Activated CD4-positive, alpha-beta T cell treated with anti-CD3 and anti-CD28 coated beads for 36 hours (primary cell): ENCODE measurements at regions of chr6 and their contacts with region 1.

Region 1: DNA sequence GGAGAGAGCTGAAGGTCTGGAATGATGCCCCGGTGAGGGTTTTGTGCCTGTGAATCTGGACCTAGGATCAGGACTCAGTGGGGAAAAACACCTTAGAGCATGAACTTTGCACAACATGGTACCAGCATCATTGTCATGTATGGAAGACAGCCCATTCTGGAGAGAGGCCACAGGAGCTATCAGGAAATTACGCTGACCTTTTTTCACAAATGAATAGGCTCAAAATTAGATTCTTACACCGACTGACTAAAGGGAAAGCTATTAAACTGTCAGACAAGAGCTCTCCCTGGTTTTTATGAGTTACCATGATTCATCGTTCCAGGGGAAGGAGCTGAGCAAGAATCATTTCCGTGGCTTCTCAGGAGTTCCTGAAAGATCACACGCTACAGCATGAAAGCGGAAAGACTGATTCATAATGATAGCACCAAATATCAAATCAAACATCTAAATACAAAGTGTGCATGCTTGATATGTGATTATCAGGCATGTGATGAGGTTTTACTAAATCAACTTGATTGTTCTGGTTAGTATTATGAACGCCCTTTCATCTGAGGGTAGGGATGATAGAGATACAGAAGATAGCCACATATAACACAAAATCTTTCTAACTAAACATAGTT is 224.9 kb upstream of the SMLR1 start:
- DNase-seq: peak; percentile 38
- ATAC-seq: peak; percentile 97
- H3K4me3 Mint-ChIP-seq: peak overlapping the region; percentile 11
- H3K27ac Mint-ChIP-seq: peak overlapping the region; percentile 53
- H3K4me1 Mint-ChIP-seq: peaks cover 26% of the 10 kb centered on the region
- H3K27me3 Mint-ChIP-seq: no peaks in the 10 kb centered on the region

Region 2: GRCh38 chr6:130027948-130028347 is 574.3 kb before region 1 on chr6:
- CTCF ChIA-PET with region 1: no interaction called
- POLR2A ChIA-PET with region 1: no interaction called
- intact Hi-C with region 1: loop called in 1 of 2 experiments (anchors 2 kb)
- DNase-seq: no peak
- ATAC-seq: peak; percentile 67
- H3K4me3 Mint-ChIP-seq: no peak overlapping the region
- H3K27ac Mint-ChIP-seq: peak overlapping the region; percentile 66
- H3K4me1 Mint-ChIP-seq: peaks cover 62% of the 10 kb centered on the region
- H3K27me3 Mint-ChIP-seq: no peaks in the 10 kb centered on the region

Region 3: DNA sequence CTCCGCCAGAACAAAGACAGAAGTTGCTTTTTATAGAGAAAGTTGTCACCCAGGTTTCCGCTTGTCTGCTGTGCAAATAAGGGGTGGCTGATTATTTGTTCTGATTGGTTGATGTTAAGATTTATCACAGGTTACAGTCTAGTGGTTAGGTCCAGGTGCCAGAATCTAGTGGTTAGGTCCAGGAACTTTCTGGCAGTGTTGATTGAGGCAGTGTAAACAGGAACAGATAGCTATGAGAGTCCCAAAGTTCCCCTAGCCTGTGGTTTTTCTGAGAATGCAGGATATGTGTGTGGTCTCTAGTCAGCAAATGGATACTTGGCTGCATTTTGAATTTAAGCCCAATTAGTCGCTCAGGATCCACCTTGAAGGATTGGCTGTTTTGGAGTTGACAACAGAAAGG is 88.5 kb before region 1 on chr6:
- CTCF ChIA-PET with region 1: no interaction called
- POLR2A ChIA-PET with region 1: no interaction called
- intact Hi-C with region 1: loop called (anchors 1 to 2 kb)
- DNase-seq: peak; percentile 62
- ATAC-seq: peak; percentile 81
- H3K4me3 Mint-ChIP-seq: no peak overlapping the region
- H3K27ac Mint-ChIP-seq: peak overlapping the region; percentile 76
- H3K4me1 Mint-ChIP-seq: peaks cover 61% of the 10 kb centered on the region
- H3K27me3 Mint-ChIP-seq: no peaks in the 10 kb centered on the region

Region 4: DNA sequence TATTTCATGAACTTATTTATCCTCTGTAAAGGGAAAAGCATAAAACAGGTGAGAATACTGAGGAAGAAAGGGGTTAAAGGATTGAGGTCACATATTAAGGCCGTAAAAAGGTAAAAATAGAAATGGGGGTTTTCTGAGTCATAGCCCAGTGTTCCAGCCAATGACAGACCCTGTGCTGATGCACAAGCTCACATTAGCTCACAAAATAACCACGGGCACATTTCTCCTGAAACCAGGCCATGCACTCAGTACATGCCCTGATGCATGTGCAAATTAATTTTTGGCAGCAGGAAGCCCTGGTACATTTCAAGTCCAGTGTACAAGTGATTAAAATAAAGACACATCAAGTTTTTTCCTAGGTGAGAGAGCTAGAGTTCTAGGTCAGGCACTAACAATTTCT is 42.0 kb before region 1 on chr6:
- CTCF ChIA-PET with region 1: no interaction called
- POLR2A ChIA-PET with region 1: no interaction called
- intact Hi-C with region 1: loop called (anchors 1 kb)
- DNase-seq: no peak
- ATAC-seq: no peak
- H3K4me3 Mint-ChIP-seq: no peak overlapping the region
- H3K27ac Mint-ChIP-seq: no peak overlapping the region
- H3K4me1 Mint-ChIP-seq: peaks cover 22% of the 10 kb centered on the region
- H3K27me3 Mint-ChIP-seq: no peaks in the 10 kb centered on the region

Region 5: DNA sequence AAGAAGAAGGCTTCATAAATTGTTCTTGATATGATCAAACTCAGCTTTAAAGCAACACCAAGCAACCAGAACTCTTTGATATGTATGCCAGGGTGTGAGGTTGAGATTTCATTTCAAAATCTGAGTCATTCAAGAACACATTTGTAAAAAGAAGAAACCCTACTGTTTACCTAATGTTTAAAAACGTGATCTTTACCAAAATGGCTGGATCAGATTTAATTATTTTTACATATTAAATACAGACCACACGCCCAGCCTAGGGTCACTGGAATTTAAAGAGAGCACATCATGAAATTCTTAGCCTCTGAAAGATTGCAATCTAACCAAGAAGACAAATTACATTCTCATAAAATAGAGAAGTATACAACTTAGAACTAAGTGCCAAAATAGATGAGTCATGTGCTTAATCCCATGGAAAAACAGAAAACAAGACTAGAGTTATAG is 18.1 kb after region 1 on chr6:
- CTCF ChIA-PET with region 1: interaction called, 4 read pairs
- POLR2A ChIA-PET with region 1: no interaction called
- intact Hi-C with region 1: loop called (anchors 1 to 2 kb)
- DNase-seq: no peak
- ATAC-seq: peak; percentile 65
- H3K4me3 Mint-ChIP-seq: no peak overlapping the region
- H3K27ac Mint-ChIP-seq: no peak overlapping the region
- H3K4me1 Mint-ChIP-seq: peaks cover 20% of the 10 kb centered on the region
- H3K27me3 Mint-ChIP-seq: no peaks in the 10 kb centered on the region

Region 6: GRCh38 chr6:130625825-130626527 is 23.7 kb after region 1 on chr6:
- CTCF ChIA-PET with region 1: interaction called, 3 read pairs
- POLR2A ChIA-PET with region 1: interaction called, 4 read pairs
- intact Hi-C with region 1: loop called (anchors 1 kb)
- DNase-seq: peak; percentile 25
- ATAC-seq: peak; percentile 66
- H3K4me3 Mint-ChIP-seq: no peak overlapping the region
- H3K27ac Mint-ChIP-seq: no peak overlapping the region
- H3K4me1 Mint-ChIP-seq: peaks cover 26% of the 10 kb centered on the region
- H3K27me3 Mint-ChIP-seq: no peaks in the 10 kb centered on the region

Region 7: GRCh38 chr6:130778946-130779657 is 176.8 kb after region 1 on chr6:
- CTCF ChIA-PET with region 1: no interaction called
- POLR2A ChIA-PET with region 1: no interaction called
- intact Hi-C with region 1: no loop called
- DNase-seq: no peak
- ATAC-seq: no peak
- H3K4me3 Mint-ChIP-seq: no peak overlapping the region
- H3K27ac Mint-ChIP-seq: no peak overlapping the region
- H3K4me1 Mint-ChIP-seq: peaks cover 48% of the 10 kb centered on the region
- H3K27me3 Mint-ChIP-seq: no peaks in the 10 kb centered on the region